ENCODE measurements at regions of chr1 and their contacts with region 1.

Region 1: DNA sequence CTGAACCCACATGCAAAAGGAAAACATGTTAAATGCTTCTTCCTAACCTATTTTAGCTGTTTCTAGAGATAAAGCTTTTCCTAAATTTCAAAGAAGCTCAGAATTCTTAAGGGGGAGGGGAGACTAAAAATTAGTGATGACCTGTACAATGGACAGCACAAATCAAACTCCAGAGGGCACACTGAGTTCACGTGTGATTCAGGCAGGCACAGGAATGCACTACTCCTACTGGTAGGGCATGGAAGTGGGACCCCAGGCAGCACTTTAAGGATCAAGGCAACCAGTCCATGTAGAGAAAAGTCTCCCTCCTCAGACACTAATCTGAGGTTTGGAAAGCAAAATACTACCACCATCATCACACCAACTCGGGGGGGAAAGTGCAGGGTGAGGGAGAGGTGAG is 31.3 kb upstream of the CLCA4 start:
- DNase-seq: no peak
- ATAC-seq: no peak
- H3K4me3 ChIP-seq: no peak overlapping the region
- H3K27ac ChIP-seq: no peak overlapping the region
- H3K4me1 ChIP-seq: no peaks in the 10 kb centered on the region
- H3K27me3 ChIP-seq: no peaks in the 10 kb centered on the region
- CTCF ChIP-seq: peak in 1 of 5 experiments; percentile 37
- POLR2A ChIP-seq: no peak

Region 2: DNA sequence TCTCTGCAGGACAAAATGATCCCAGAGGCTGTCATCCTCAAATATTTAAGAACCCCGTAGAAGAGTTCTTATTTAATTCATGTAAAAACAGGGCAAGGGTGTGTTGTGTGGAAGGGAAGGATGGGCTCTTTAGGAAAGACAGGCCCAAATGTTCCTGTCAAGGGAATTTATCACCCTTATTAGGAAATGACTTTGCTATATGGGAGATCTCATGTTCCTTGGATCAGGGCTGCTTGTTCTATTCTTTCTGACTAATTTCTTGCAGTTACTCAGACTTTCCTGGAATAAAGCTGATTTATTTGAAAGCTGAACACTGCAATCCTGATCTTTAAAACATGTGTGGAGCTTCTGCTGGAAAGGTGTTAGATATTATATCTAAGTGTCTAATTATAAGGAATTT is 325.5 kb after region 1 on chr1:
- in situ Hi-C with region 1: no loop called
- intact Hi-C with region 1: loop called (anchors 5 kb)
- DNase-seq: no peak
- ATAC-seq: no peak
- H3K4me3 ChIP-seq: no peak overlapping the region
- H3K27ac ChIP-seq: no peak overlapping the region
- H3K4me1 ChIP-seq: no peaks in the 10 kb centered on the region
- H3K27me3 ChIP-seq: no peaks in the 10 kb centered on the region
- CTCF ChIP-seq: no peak
- POLR2A ChIP-seq: no peak